PC-3 (cell line): ENCODE measurements at regions of chr1 and their contacts with region 1.

Region 1: GRCh38 chr1:6199298-6200187 is at the start of gene RPL22:
- DNase-seq: peak; percentile 100
- ATAC-seq: peak; percentile 99
- H3K4me3 ChIP-seq: peak within 1 kb of the TSS; percentile 74
- H3K27ac ChIP-seq: peak within 1 kb of the TSS; percentile 66
- H3K4me1 ChIP-seq: peaks cover 21% of the 10 kb centered on the region
- H3K27me3 ChIP-seq: no peaks in the 10 kb centered on the region
- CTCF ChIP-seq: no peak
- total RNA-seq, gene RPL22: 283 and 297 TPM in 2 replicates

Region 2: DNA sequence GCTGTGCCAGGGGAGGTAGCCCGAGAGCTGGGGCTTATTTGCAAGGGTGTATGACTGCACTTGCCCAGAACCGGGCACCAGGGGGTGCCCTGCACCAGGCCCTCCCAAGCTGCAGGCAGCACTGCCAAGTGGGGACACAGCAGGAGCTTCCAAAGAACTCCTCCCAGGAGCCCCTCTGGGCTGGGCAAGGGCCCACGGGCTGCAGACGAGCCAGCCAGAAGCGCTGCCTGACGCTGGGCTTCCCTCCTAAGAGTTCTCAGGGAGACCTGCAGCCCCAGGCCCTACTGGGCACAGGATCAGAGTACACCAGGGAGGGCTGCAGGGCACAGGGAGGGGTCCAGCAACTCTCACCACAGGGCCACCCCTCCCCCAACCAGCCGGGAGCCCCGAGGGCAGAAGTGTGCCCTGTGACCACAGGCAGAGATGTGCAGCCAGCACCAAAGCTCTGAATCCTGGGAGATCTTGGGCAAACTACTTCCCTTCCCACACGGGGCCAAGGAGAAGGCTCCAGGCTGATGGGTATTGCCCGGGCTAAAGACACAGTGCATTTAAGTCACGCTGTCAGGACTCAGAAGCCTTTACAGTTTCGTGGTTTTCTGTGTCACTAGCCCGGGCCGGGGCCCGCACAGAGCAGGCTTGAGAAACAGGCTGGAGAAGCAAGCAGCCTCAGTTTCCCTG is 90.5 kb before region 1 on chr1:
- CTCF ChIA-PET with region 1: interaction called, 15 read pairs
- POLR2A ChIA-PET with region 1: no interaction called
- intact Hi-C with region 1: no loop called
- DNase-seq: peak; percentile 89
- ATAC-seq: peak; percentile 96
- H3K4me3 ChIP-seq: no peak overlapping the region
- H3K27ac ChIP-seq: no peak overlapping the region
- H3K4me1 ChIP-seq: peaks cover 4% of the 10 kb centered on the region; the same call in 1 of the 2 replicates
- H3K27me3 ChIP-seq: no peaks in the 10 kb centered on the region
- CTCF ChIP-seq: peak; percentile 96

Region 3: DNA sequence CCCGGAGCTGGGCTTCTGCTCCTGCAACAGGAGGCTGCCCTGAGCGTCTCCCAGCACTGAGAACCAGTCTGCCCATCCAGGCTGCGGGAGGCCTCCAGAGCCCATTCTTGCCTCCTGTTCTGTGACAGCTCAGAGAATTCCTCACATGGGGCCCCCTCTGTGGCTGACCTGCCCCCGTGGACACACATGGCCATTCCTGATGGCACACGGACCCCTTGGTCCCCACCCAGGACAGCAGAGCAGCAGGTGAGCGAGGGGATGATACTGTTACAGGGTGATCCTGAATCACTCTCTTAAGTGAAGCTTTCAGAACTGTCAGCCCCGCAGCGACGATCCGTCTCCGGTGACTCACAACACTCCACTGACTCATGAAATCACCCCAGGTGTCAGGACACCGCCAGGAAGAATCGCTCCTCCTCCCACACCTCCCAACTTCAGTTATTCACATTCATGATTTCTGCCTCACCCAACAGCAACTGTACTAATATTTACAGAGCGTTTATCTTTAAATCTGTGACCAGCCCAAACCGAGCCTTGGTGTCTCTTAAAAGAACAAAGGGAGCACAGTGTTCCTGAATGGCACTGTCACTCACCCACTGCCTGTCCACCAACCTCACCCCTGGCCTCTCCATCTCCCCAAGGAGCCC is 41.9 kb before region 1 on chr1:
- CTCF ChIA-PET with region 1: interaction called, 7 read pairs
- POLR2A ChIA-PET with region 1: no interaction called
- intact Hi-C with region 1: loop called (anchors 1 kb)
- DNase-seq: peak; percentile 100
- ATAC-seq: peak; percentile 88
- H3K4me3 ChIP-seq: peak overlapping the region; percentile 32; the same call in 1 of the 2 replicates
- H3K27ac ChIP-seq: peak overlapping the region; percentile 97
- H3K4me1 ChIP-seq: peaks cover 27% of the 10 kb centered on the region
- H3K27me3 ChIP-seq: no peaks in the 10 kb centered on the region
- CTCF ChIP-seq: no peak

Region 4: GRCh38 chr1:6220241-6220640 is 20.7 kb after region 1 on chr1:
- CTCF ChIA-PET with region 1: interaction called, 19 read pairs
- POLR2A ChIA-PET with region 1: no interaction called
- intact Hi-C with region 1: no loop called
- DNase-seq: peak; percentile 99
- ATAC-seq: peak; percentile 90
- H3K4me3 ChIP-seq: peak overlapping the region; percentile 18; the same call in 1 of the 2 replicates
- H3K27ac ChIP-seq: peak overlapping the region; percentile 84
- H3K4me1 ChIP-seq: peaks cover 61% of the 10 kb centered on the region
- H3K27me3 ChIP-seq: no peaks in the 10 kb centered on the region
- CTCF ChIP-seq: no peak

Region 5: DNA sequence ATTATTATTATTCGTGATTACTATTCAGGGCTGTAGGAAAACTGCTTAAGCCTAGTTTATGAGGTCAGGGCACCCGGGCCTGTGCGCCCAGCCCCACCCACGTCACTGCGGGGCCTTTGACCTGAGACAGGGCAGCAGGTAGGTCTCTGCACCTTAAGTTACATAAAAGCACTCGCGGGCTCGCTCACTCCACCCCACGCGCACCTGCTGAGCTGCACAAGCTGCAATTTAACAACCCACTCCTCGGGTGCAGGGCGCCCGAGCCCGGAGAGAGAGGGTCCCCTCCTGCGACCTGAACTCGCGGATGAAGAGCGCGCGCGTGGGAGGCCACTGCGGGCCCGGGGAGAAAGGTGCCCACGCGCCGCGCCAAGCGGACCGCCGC is 35.7 kb after region 1 on chr1:
- CTCF ChIA-PET with region 1: interaction called, 18 read pairs
- POLR2A ChIA-PET with region 1: interaction called, 3 read pairs
- intact Hi-C with region 1: no loop called
- DNase-seq: no peak
- ATAC-seq: peak; percentile 10
- H3K4me3 ChIP-seq: peak overlapping the region; percentile 82
- H3K27ac ChIP-seq: peak overlapping the region; percentile 4
- H3K4me1 ChIP-seq: peaks cover 15% of the 10 kb centered on the region
- H3K27me3 ChIP-seq: no peaks in the 10 kb centered on the region
- CTCF ChIP-seq: no peak

Region 6: GRCh38 chr1:6325482-6325881 is 125.9 kb after region 1 on chr1:
- CTCF ChIA-PET with region 1: interaction called, 13 read pairs
- POLR2A ChIA-PET with region 1: no interaction called
- intact Hi-C with region 1: no loop called
- DNase-seq: peak; percentile 64
- ATAC-seq: peak; percentile 91
- H3K4me3 ChIP-seq: no peak overlapping the region
- H3K27ac ChIP-seq: peak overlapping the region; percentile 59
- H3K4me1 ChIP-seq: peaks cover 17% of the 10 kb centered on the region
- H3K27me3 ChIP-seq: no peaks in the 10 kb centered on the region
- CTCF ChIP-seq: no peak